Right ventricle myocardium inferior (tissue), 1 donor: ENCODE measurements at regions of chr4 and their contacts with region 1.

Region 1: DNA sequence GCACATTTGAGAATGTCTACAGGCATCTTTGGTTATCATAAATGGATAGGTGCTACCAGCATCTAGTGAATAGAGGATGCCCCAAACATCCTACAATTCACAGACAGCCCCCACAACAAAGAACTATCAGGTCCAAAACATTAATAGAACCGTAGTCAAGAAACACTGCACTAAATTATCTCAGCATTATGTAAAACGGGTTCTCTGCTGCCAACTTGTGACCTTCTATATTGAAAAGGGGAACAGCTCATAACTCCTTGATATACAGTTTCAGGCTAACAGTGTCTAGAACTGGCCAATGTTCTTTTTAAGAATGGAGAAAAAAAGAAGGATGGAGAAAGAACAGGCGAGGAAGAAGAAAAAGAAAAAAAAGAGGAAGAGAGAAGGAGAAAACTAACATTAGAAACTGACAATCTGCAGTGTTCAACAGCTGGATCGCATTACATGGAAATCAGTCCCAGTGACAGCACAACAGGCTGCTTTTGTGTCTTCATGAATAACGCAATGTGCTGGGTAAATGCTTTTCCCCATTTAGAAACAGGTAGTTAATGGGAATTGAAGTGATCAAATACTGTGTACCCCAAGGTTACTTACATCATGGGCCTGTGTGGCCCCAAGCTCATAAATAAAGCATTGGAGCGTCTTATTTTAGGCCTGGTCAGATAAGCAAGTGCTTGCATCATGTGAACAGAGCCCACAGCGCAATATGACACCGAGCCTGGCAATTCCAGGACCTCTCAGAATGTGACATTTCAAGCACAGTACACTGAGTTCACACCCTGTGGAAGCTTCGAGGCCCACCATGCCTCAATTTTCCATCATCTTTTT is 339.5 kb downstream of the DHX15 start:
- DNase-seq: peak; percentile 77
- ATAC-seq: peak; percentile 94

Region 2: DNA sequence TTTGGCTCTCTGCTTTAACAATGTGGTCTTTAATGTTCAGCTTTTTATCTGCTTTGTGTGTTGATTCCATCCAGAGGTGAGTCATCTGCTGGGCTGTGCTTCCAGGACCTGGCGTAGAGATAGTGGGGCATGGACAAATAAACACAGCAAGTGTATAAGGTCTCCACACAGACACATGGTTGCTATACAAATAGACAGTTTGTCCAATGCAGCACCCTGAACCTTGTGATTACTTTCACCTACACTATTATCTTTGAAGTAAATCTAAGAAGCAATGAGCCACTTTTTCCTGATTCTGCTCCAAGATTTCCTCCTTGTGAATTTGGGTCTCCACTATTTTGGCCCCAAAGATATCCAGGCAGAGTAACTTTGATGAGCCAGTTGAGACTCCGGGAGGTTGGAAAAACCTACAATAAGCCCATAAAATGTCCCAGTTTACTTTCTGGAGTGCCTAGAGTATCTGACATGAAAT is 367.1 kb before region 1 on chr4:
- intact Hi-C with region 1: loop called (anchors 10 kb)
- DNase-seq: no peak
- ATAC-seq: peak; percentile 76

Region 3: DNA sequence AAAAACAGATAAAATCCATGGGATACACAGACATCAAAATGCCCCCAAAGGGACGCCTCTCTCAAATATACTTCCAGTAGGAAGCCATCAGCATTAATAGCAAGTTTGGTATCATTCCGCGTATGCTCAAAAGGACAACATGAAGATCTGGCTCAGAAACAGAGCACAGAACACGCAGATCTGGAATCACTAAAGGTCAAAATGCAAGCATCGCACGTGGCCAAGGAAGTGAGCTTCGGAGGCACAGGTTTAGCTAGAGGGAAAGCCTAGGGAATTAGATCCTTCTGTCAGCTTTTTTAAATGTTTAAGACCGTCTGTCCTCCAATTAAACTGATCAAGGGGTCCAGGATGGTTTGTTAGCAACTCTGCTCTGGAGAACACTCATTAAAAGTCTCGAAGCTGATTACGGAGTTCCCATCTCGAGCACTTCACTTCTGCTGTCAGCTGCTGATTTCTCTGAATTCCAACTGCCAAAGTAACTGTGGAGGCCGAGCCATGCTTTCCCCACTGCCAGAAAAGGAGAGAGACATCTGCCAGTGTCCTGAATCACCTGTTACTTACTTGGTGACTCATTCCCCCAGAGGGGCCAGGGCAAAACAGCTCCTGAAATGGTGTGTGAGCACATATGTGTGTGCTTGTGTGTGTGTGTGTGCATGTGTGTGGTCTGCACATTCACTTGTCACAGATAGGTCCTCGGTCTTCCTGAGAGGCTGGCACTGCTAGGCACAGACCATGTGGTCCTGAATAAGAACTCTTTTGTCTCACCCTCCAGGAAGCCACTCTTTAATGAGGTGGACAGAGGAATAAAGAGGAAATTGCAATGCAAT is 177.3 kb before region 1 on chr4:
- intact Hi-C with region 1: loop called (anchors 5 kb)
- DNase-seq: no peak
- ATAC-seq: peak; percentile 73

Region 4: DNA sequence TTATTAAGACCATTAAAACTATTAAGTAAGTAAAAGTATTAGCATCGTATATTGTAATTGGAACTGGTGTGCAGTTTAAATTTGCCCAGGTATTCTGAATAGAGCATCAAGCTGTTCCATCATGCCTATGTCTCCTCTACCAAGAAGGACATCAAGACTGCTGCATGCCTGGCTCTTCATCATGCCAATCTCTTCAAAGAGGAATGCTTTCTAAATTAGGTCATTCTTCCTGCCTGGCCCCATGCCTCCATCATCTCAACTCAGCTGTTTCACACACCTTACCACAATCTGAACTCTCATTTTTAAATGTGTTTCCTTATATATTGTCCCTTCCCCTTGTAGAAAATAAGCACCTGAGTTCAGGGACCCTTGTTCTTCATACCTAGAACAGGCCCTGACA is 84.5 kb before region 1 on chr4:
- intact Hi-C with region 1: no loop called
- DNase-seq: no peak
- ATAC-seq: no peak